Spleen (tissue), 13 donors: ENCODE measurements at regions of chr10 and their contacts with region 1.

Region 1: GRCh38 chr10:12181065-12181775 is 14.5 kb downstream of the NUDT5 start:
- DNase-seq: peak; percentile 87
- H3K4me3 ChIP-seq: no peak overlapping the region
- H3K27ac ChIP-seq: peak overlapping the region in 6 of 8 donors; percentile 13 to 72 (median 58)
- H3K4me1 ChIP-seq: peaks cover 0 to 32% (median 12%) of the 10 kb centered on the region in 6 donors
- H3K27me3 ChIP-seq: no peaks in the 10 kb centered on the region
- CTCF ChIP-seq: no peak
- POLR2A ChIP-seq: no peak

Region 2: GRCh38 chr10:12129222-12130111 is 51.8 kb before region 1 on chr10 and contains the start of gene SEC61A2:
- intact Hi-C with region 1: loop called (anchors 10 kb)
- DNase-seq: peak; percentile 100
- H3K4me3 ChIP-seq: peak within 1 kb of the TSS; percentile 91 to 100 (median 99)
- H3K27ac ChIP-seq: peak within 1 kb of the TSS; percentile 88 to 98 (median 94)
- H3K4me1 ChIP-seq: peaks cover 3 to 30% (median 16%) of the 10 kb centered on the region in 6 donors
- H3K27me3 ChIP-seq: no peaks in the 10 kb centered on the region
- CTCF ChIP-seq: no peak
- POLR2A ChIP-seq: peak in 2 of 3 donors; percentile 8 to 60
- total RNA-seq, gene SEC61A2: 7.2 to 14.6 (median 8.4) TPM